AG04449 (cell line): ENCODE measurements at regions of chr12 and their contacts with region 1.

Region 1: DNA sequence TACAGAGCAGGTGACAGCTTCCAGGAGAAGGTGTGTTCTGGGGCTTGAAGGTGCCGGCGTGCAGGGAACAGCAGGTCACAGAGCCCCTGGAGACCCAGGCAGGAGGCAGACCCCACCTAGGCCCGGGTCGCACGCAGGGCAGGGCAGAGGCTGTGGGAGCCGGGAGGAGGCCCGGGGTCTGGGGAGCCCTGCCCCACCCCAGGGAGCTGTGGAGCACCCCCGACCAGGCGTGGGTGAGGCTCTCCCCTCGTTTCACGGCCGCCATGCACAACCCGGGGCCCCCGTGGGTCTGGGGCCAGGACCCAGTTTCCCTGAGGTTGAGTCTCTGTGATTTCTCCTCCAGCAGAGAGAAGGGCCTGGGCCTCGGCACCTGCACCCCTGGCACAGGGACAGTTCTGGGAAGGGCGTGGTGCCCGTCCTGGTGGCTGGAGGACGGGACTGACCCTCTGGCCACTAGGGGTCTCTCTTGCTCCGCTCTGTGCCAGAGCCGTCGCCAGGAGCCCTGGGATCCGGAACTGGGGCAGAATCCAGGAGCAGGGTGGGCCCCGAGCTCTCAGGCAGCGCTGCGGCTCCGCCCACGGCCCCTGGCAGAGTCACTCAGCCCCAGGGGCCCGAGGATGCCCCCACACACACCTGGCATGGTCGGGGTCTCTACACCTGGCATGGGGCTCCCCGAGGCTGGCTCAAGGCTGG is 75.2 kb upstream of the FBRSL1 start:
- DNase-seq: no peak
- H3K4me3 ChIP-seq: no peak overlapping the region
- CTCF ChIP-seq: peak; percentile 93

Region 2: GRCh38 chr12:132162508-132163031 is 252.2 kb before region 1 on chr12:
- CTCF ChIA-PET with region 1: interaction called, 18 read pairs
- POLR2A ChIA-PET with region 1: no interaction called
- DNase-seq: peak; percentile 41
- H3K4me3 ChIP-seq: no peak overlapping the region; the same call in 1 of the 2 replicates
- CTCF ChIP-seq: no peak

Region 3: GRCh38 chr12:132454193-132454932 is 39.6 kb after region 1 on chr12:
- CTCF ChIA-PET with region 1: no interaction called
- POLR2A ChIA-PET with region 1: no interaction called
- DNase-seq: no peak
- H3K4me3 ChIP-seq: no peak overlapping the region
- CTCF ChIP-seq: no peak

Region 4: DNA sequence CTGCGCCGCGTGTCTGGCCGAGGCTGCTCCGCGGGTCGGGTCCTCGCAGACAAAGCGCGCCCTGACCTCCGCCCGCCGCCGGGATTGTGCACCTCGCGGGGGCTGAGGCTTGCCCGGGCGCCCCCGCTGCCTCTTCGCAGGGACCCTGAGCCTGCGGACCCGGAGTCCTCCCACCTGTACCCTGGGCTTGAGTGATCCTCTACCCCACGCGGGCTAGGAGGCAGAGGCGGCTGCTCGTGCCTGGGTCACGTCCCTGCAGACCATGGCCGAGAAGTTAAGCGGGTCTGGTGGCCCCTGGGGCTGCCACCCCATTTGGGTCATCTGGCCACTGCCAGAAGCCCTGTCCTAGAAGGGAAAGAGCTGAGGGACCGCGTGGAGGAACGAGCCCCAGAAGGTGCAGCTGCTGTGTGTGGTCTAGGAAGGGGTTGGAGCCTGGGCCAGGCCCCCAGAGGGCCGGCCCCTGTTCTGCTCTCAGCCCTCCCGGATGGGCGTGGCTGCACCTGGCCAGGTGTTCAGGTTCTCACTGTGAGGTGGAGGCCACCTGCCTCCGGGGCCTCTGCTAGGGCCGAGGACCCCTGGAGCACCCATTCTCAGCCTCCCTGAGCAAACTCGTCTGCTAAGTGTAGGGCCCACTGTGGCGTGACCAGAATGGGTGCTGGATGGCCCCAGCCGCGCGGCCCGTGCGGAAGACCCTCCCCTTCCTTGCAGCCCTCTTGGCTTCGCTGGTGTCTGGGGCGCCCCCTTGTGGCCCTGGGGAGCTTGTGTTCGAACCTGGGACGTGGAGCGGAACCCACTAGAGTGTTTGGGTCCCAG is 146.0 kb after region 1 on chr12:
- CTCF ChIA-PET with region 1: interaction called, 37 read pairs
- POLR2A ChIA-PET with region 1: no interaction called
- DNase-seq: no peak
- H3K4me3 ChIP-seq: peak overlapping the region; percentile 68
- CTCF ChIP-seq: peak; percentile 89

Region 5: DNA sequence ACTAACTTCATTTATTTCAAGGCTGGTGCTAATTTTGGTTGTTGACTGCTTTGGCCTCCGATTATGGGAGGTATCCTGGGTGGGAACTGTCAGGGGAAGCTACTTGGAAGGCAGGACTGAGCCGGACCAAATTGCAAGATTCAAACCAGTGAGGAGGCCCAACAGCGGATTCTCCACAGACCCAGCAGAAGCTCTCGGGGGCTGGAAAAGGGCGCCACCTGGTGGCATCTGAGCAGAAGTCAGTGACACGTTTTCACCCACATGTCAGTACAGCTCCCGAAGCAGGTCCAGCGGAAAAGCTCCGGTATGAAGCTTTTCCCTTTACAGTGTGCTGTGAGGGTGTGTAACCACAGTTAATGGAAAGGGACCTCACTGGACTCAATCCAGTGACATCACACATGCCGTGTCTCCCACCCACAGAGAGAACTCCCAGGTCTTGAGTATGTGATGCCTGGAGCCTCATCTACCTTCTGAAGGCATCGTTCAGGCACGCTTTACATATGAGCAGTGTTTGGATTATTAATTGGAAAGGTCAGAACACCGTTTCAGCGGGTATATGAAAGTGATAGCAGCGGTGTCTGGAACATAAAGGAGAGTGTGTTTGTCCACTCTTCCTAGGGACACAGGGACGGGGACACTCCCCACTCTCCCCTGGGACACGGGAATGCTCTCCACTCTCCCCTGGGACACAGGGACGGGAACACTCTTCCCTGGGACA is 200.2 kb after region 1 on chr12:
- CTCF ChIA-PET with region 1: interaction called, 156 read pairs
- POLR2A ChIA-PET with region 1: no interaction called
- DNase-seq: peak; percentile 28
- H3K4me3 ChIP-seq: no peak overlapping the region
- CTCF ChIP-seq: peak; percentile 89

Region 6: DNA sequence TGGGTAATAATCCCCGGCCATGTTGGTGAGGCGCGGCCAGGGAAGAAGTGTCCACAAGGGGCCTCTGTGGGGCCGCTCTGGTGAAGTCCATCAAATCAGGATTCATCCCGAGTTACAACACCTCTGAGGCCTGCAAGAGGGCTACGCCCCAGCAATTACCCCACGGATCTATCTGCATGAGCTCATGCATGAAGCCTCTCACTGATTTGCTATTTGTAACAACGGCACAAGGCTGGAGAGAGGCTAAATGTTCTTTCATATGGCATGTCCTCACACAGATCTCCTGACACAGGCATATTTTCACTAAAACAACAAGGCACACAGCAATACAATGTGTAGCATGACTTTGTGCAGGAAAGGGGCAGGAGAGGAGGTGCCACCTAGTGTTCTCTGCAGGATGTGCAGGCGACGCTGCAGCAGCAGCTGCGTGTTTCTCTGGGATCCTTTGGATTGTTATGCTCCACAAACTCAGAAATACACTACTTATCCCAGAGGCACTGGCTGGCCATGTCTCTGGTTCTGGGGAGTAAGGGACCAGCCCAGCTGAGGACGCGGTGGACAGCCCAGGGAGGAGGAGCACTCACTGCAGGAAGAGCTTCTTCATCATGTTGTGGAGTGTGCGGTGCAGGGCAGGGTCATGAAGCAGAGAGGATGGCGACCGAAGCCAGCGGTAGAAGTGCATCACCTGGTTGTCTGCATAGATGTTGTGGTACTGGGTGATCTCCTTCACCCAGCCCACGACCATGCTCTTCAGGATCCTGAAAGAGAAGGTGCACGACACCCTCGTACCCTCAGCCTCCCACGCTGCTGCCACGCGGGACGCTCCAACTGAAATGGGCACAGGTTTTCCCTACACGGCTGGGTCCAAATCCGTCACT is 224.0 kb after region 1 on chr12:
- CTCF ChIA-PET with region 1: interaction called, 78 read pairs
- POLR2A ChIA-PET with region 1: no interaction called
- DNase-seq: peak; percentile 10
- H3K4me3 ChIP-seq: no peak overlapping the region
- CTCF ChIP-seq: peak; percentile 92